Mammary epithelial cell (primary cell): ENCODE measurements at regions of chr11 and their contacts with region 1.

Region 1: GRCh38 chr11:65779851-65780577 is 762 bp downstream of the AP5B1 start:
- DNase-seq: peak; percentile 74
- H3K4me3 ChIP-seq: peak overlapping the region; percentile 83 to 93 (median 86)
- H3K27ac ChIP-seq: peak overlapping the region; percentile 90
- H3K4me1 ChIP-seq: peaks cover 40% of the 10 kb centered on the region
- H3K27me3 ChIP-seq: no peaks in the 10 kb centered on the region
- CTCF ChIP-seq: peak; percentile 87 to 92

Region 2: GRCh38 chr11:65720237-65720934 is 59.6 kb before region 1 on chr11 and contains the start of gene RNASEH2C:
- CTCF ChIA-PET with region 1: no interaction called
- dilution Hi-C with region 1: loop called (anchors 10 kb)
- in situ Hi-C with region 1: no loop called
- intact Hi-C with region 1: no loop called
- DNase-seq: peak; percentile 81
- H3K4me3 ChIP-seq: peak within 1 kb of the TSS; percentile 57 to 83 (median 70)
- H3K27ac ChIP-seq: peak within 1 kb of the TSS; percentile 33
- H3K4me1 ChIP-seq: peaks cover 12% of the 10 kb centered on the region
- H3K27me3 ChIP-seq: no peaks in the 10 kb centered on the region
- CTCF ChIP-seq: no peak
- total RNA-seq, gene RNASEH2C: 16.0 to 38.1 TPM

Region 3: GRCh38 chr11:65743928-65744698 is 35.9 kb before region 1 on chr11:
- CTCF ChIA-PET with region 1: interaction called, 13 read pairs
- dilution Hi-C with region 1: no loop called
- in situ Hi-C with region 1: no loop called
- intact Hi-C with region 1: no loop called
- DNase-seq: no peak
- H3K4me3 ChIP-seq: no peak overlapping the region
- H3K27ac ChIP-seq: no peak overlapping the region
- H3K4me1 ChIP-seq: no peaks in the 10 kb centered on the region
- H3K27me3 ChIP-seq: no peaks in the 10 kb centered on the region
- CTCF ChIP-seq: peak in 1 of 2 donors; percentile 33